Heart right ventricle (tissue), 16 donors: ENCODE measurements at regions of chr7 and their contacts with region 1.

Region 1: DNA sequence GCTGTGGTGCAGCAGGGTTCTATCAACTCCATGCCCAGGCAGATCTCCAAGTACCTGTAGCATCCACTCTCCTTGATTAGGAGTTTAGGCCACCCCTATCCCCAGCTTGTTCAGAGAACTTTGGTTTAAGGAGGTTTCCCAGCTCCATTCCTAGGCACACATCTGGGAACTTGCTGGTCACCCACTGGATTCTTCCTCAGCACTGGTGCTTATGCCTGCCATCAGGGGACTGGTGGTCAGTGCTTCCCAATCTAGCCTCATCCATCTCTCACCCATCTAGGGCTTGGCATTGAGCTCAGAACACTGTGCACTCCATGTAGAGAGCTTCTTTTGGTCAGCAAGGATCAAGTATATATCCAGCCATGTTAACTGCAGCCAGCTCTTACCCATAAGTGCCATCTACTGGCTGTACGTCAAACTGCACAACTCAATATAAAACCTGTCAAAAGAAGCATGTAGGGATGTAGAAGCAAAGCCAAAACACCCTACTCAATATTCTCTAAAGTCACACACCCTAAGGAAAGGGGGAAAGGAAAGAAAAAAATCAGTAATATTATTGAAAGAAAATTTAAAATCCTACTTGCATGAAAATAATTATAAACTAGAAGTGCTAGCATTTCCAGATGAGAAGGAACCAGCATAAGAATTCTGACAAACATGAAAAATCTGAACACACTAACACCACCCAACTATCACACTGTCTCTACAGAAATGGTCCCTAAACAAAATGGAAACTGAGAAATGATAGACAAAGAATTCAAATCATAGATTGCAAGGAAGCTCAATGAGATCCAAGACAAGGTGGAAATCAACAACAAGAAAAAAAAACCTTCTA is 531.2 kb upstream of the STEAP1 start:
- DNase-seq: no peak
- ATAC-seq: peak in 3 of 8 donors; percentile 31 to 66 (median 38)
- H3K4me3 ChIP-seq: no peak overlapping the region
- H3K27ac ChIP-seq: no peak overlapping the region
- H3K4me1 ChIP-seq: peaks cover 0 to 4% (median 0%) of the 10 kb centered on the region in 9 donors
- H3K27me3 ChIP-seq: no peaks in the 10 kb centered on the region
- CTCF ChIP-seq: peak; percentile 29 to 63 (median 53)

Region 2: DNA sequence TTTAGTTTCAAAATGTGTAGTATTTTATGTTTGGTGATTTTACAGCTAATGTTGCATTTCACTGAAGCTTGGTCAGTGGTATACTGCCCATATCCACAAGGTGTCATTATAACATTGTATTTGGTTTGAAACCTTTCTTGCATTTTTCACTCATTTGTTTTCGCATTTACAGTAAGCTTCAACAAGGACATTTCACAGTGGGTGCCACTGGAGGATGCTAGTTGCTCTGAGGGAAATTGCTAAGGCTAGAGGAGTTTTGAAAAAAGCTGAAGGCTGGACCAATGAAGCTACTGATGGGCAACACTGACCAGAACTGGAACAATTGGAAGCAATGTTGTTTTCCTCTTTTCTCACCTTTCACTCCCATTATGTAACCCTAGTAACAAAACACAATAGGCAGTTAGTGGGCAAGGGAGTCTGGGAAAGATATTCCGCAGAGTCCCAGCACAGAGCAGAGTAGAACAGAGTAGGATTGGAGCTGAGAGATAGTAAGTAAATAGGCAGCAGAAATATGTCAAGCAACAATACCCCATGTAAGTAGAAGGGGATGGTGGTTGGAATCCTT is 1379.6 kb before region 1 on chr7:
- intact Hi-C with region 1: loop called in 1 of 10 experiments (anchors 10 kb)
- DNase-seq: peak in 1 of 2 donors; percentile 22
- ATAC-seq: peak; percentile 30 to 85 (median 80)
- H3K4me3 ChIP-seq: no peak overlapping the region
- H3K27ac ChIP-seq: no peak overlapping the region
- H3K4me1 ChIP-seq: peaks cover 0 to 5% (median 2%) of the 10 kb centered on the region in 9 donors
- H3K27me3 ChIP-seq: no peaks in the 10 kb centered on the region
- CTCF ChIP-seq: peak; percentile 60 to 87 (median 80)

Region 3: GRCh38 chr7:88344956-88345832 is 1277.9 kb before region 1 on chr7:
- intact Hi-C with region 1: loop called in 1 of 10 experiments (anchors 10 kb)
- DNase-seq: peak; percentile 30 to 53
- ATAC-seq: peak in 7 of 8 donors; percentile 76 to 93 (median 85)
- H3K4me3 ChIP-seq: no peak overlapping the region
- H3K27ac ChIP-seq: no peak overlapping the region
- H3K4me1 ChIP-seq: peaks cover 0 to 8% (median 0%) of the 10 kb centered on the region in 9 donors
- H3K27me3 ChIP-seq: peaks cover 0 to 7% (median 0%) of the 10 kb centered on the region in 7 donors
- CTCF ChIP-seq: peak; percentile 15 to 73 (median 60)

Region 4: DNA sequence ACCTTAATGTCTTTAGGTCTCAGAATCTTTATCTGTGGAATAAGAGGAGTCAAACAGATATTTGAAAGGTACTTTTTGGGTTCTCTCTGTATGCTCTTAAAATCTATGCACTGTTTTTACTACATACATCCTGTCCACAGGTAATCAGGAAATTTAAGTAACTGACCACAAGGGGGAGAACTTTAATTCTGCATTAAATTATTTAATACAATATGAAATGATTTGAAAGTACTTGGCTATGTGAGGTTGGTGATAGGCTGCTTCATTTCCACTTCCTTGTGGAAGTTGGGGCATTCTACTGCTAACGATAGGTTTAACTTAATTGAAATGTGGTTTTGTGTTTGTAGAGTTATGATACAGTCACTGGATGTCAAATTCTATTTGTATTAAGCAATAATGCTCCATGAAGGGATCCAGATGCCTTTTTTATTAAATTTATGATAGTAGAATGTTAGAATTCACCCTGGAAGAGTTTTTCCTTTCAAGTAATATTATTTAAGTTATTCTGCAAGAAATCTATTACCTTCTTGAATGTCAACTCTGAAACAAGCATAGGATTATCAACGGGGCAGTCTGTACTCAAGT is 833.5 kb before region 1 on chr7:
- intact Hi-C with region 1: loop called in 2 of 10 experiments (anchors 5 to 10 kb)
- DNase-seq: no peak
- ATAC-seq: no peak
- H3K4me3 ChIP-seq: no peak overlapping the region
- H3K27ac ChIP-seq: no peak overlapping the region
- H3K4me1 ChIP-seq: no peaks in the 10 kb centered on the region
- H3K27me3 ChIP-seq: no peaks in the 10 kb centered on the region
- CTCF ChIP-seq: peak; percentile 13 to 58 (median 50)